H1 (cell line): ENCODE measurements at regions of chr11 and their contacts with region 1.

Region 1: DNA sequence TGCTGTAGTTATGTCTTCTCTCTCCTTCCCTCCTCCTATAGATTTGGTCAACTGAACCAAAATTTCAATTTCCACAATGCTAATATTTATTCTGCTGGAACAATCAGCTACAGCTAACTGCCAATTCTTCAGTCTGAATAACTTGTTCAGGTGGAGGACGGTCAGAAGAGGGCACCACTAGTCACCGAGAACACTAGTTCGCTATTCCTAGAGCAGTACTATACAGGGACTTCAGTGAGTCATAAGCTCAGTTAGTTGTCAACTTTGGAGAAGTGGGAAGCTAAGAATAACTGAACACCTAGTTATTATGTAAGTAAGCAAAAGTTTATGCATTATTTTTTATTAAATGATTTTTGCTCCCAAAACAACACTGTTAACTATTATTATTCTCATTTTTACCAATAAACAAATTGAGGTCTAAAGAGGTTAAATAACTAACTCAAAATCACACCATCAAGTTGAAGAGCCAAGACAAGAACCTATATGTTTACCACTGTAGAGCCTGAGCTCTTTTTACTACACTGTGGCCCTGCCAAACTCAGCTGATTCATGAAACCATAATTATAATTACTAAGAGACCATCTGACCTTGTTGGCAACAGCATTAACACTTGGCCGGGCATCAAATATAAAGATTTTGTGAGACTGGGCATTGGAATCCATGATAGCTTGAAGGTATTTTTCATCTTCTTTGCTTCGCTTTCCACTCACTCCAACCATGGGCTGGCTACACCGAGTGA is 59.0 kb downstream of the CEP57 start:
- DNase-seq: peak; percentile 7 to 48
- H3K4me3 ChIP-seq: no peak overlapping the region
- H3K27ac ChIP-seq: no peak overlapping the region
- H3K4me1 ChIP-seq: no peaks in the 10 kb centered on the region
- H3K27me3 ChIP-seq: no peaks in the 10 kb centered on the region
- CTCF ChIP-seq: peak; percentile 10 to 59 (median 59)
- EP300 ChIP-seq: no peak
- POLR2A ChIP-seq: no peak
- RAD21 ChIP-seq: peak; percentile 70 to 80

Region 2: DNA sequence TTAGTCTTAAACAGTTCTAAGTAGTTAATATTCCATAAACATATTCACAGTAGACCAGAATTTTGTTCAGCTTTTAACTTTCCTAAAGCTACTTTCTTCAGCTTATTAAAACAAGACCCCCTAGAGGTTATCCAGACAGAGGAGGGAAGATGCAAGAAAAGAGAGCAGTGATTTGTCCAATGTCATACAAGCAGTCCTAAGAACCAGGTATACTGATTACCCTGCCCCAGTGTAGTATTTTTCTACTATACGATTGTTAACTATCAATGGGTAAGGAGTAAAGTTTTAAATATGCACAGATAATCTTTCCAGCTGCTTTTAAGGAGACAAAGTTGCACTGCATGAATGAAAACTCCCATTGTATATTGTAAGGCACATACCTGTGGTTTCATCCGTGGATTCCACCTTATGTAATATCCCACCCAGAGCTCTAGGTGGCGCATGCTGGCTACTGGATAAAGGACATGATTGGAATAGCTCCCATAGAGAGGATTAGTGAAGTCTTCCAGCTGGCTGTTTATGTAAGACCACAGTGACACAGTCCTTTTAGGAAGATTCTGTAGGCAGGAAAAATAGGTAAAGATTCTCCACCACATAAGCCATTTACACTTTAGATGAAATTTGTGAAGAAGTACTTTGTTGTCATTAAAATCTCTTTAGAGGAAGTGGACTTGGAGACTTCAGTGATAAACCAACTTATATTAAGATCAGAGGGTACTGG is 13.3 kb before region 1 on chr11:
- CTCF ChIA-PET with region 1: interaction called, 47 read pairs
- POLR2A ChIA-PET with region 1: no interaction called
- DNase-seq: peak; percentile 5 to 55
- H3K4me3 ChIP-seq: no peak overlapping the region
- H3K27ac ChIP-seq: no peak overlapping the region
- H3K4me1 ChIP-seq: no peaks in the 10 kb centered on the region
- H3K27me3 ChIP-seq: no peaks in the 10 kb centered on the region
- CTCF ChIP-seq: peak; percentile 6 to 85 (median 74)
- EP300 ChIP-seq: no peak
- POLR2A ChIP-seq: no peak
- RAD21 ChIP-seq: peak; percentile 86 to 92

Region 3: GRCh38 chr11:96393753-96394348 is 544.6 kb after region 1 on chr11:
- CTCF ChIA-PET with region 1: interaction called, 12 read pairs
- POLR2A ChIA-PET with region 1: interaction called, 3 read pairs
- DNase-seq: no peak
- H3K4me3 ChIP-seq: no peak overlapping the region
- H3K27ac ChIP-seq: no peak overlapping the region
- H3K4me1 ChIP-seq: peaks cover 0 to 2% (median under 1%) of the 10 kb centered on the region in 4 experiments; a peak in 2 of 7 replicates
- H3K27me3 ChIP-seq: no peaks in the 10 kb centered on the region
- CTCF ChIP-seq: peak in 2 of 3 experiments; percentile 40 to 59; a peak in 2 of 4 replicates
- EP300 ChIP-seq: no peak
- POLR2A ChIP-seq: no peak
- RAD21 ChIP-seq: peak; percentile 70 to 73

Region 4: DNA sequence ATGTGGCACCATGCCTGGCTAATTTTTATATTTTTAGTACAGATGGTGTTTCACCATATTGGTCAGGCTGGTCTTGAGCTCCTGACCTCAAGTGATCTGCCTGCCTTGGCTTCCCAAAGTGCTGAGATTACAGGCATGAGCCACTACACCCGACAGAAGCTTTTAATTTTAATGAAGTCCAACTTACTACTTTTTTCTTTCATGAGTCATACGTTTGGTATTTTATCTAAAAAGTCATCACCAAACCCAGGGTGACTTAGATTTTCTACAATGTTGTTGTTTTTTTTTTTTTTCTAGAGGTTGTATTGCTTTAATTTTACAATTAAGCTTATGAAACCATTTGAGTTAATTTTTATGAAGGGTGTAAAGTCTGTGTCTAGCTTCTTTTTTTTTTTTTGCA is 575.4 kb after region 1 on chr11:
- CTCF ChIA-PET with region 1: interaction called, 24 read pairs
- POLR2A ChIA-PET with region 1: no interaction called
- DNase-seq: no peak
- H3K4me3 ChIP-seq: no peak overlapping the region
- H3K27ac ChIP-seq: no peak overlapping the region
- H3K4me1 ChIP-seq: peaks cover 0 to 2% (median 0%) of the 10 kb centered on the region in 4 experiments; a peak in 2 of 7 replicates
- H3K27me3 ChIP-seq: no peaks in the 10 kb centered on the region
- CTCF ChIP-seq: no peak
- EP300 ChIP-seq: no peak
- POLR2A ChIP-seq: no peak
- RAD21 ChIP-seq: no peak